Transverse colon (tissue), 4 donors: ENCODE measurements at regions of chr18 and their contacts with region 1.

Region 1: GRCh38 chr18:24456549-24456948 is 3.9 kb upstream of the HRH4 start:
- DNase-seq: no peak
- H3K4me3 ChIP-seq: no peak overlapping the region
- H3K27ac ChIP-seq: no peak overlapping the region
- H3K4me1 ChIP-seq: no peaks in the 10 kb centered on the region
- H3K27me3 ChIP-seq: no peaks in the 10 kb centered on the region
- CTCF ChIP-seq: no peak
- EP300 ChIP-seq: no peak
- POLR2A ChIP-seq: no peak

Region 2: GRCh38 chr18:24567199-24567598 is 110.7 kb after region 1 on chr18:
- in situ Hi-C with region 1: loop called in 1 of 4 experiments (anchors 25 kb)
- intact Hi-C with region 1: no loop called
- DNase-seq: no peak
- H3K4me3 ChIP-seq: no peak overlapping the region
- H3K27ac ChIP-seq: no peak overlapping the region
- H3K4me1 ChIP-seq: no peaks in the 10 kb centered on the region
- H3K27me3 ChIP-seq: no peaks in the 10 kb centered on the region
- CTCF ChIP-seq: no peak
- EP300 ChIP-seq: no peak
- POLR2A ChIP-seq: no peak